CD4-positive, alpha-beta T cell (primary cell): ENCODE measurements at regions of chr17 and their contacts with region 1.

Region 1: GRCh38 chr17:48636177-48637018 is 10.2 kb upstream of the HOXB9 start:
- DNase-seq: peak; percentile 45 to 82 (median 58)
- ATAC-seq: peak; percentile 83
- H3K4me3 ChIP-seq: no peak overlapping the region
- H3K4me3 Mint-ChIP-seq: no peak overlapping the region
- H3K27ac ChIP-seq: no peak overlapping the region
- H3K27ac Mint-ChIP-seq: no peak overlapping the region
- H3K4me1 ChIP-seq: peaks cover 22% of the 10 kb centered on the region
- H3K4me1 Mint-ChIP-seq: peaks cover 13% of the 10 kb centered on the region
- H3K27me3 ChIP-seq: peaks cover 85 to 97% of the 10 kb centered on the region in 2 experiments
- H3K27me3 Mint-ChIP-seq: peaks cover 98% of the 10 kb centered on the region
- CTCF ChIP-seq: peak; percentile 74

Region 2: DNA sequence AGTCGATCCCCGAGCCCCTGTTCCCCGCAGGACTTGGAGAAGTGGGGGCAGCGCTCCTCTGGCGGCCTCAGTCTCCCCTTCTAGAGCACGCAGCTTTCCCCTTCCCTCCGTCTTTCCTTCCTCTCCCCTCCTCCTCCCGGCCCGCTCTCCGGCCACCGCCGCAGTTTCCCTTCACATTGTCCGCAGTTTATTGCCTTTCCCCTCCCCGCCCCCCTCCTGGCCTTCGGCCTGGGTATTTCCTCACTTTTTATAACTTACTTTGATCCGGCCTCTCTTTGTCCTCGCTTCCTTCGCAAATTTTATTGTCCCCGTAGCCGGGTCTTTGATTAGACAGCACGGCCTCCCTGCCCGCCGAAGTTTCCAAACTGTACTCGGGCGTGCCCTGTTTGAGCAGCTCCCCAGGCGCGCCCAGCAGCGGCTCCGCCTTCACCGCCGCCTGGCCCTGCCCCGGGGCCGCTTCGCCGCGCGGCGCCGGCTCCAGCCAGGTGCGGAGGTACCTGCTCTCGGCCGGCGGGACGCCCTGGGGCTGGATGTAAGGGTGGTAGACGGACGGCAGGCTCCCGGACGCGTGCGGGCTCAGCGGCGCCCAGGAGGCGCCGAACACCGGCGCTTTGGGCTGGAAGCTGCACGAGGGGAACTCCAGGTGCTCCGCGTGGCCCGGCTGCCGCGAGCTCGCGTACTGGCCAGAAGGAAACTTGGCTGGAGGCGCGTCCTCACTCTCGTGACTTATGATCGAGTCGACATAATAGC is 10.7 kb before region 1 on chr17:
- CTCF ChIA-PET with region 1: interaction called, 19 read pairs
- POLR2A ChIA-PET with region 1: interaction called, 4 read pairs
- intact Hi-C with region 1: no loop called
- DNase-seq: peak in 5 of 14 experiments; percentile 33 to 76 (median 43)
- ATAC-seq: peak; percentile 63
- H3K4me3 ChIP-seq: peak overlapping the region; percentile 44
- H3K4me3 Mint-ChIP-seq: peak overlapping the region; percentile 52
- H3K27ac ChIP-seq: no peak overlapping the region
- H3K27ac Mint-ChIP-seq: no peak overlapping the region
- H3K4me1 ChIP-seq: peaks cover 31% of the 10 kb centered on the region
- H3K4me1 Mint-ChIP-seq: peaks cover 16% of the 10 kb centered on the region
- H3K27me3 ChIP-seq: peaks cover 88 to 98% of the 10 kb centered on the region in 2 experiments
- H3K27me3 Mint-ChIP-seq: peaks cover 99% of the 10 kb centered on the region
- CTCF ChIP-seq: no peak

Region 3: DNA sequence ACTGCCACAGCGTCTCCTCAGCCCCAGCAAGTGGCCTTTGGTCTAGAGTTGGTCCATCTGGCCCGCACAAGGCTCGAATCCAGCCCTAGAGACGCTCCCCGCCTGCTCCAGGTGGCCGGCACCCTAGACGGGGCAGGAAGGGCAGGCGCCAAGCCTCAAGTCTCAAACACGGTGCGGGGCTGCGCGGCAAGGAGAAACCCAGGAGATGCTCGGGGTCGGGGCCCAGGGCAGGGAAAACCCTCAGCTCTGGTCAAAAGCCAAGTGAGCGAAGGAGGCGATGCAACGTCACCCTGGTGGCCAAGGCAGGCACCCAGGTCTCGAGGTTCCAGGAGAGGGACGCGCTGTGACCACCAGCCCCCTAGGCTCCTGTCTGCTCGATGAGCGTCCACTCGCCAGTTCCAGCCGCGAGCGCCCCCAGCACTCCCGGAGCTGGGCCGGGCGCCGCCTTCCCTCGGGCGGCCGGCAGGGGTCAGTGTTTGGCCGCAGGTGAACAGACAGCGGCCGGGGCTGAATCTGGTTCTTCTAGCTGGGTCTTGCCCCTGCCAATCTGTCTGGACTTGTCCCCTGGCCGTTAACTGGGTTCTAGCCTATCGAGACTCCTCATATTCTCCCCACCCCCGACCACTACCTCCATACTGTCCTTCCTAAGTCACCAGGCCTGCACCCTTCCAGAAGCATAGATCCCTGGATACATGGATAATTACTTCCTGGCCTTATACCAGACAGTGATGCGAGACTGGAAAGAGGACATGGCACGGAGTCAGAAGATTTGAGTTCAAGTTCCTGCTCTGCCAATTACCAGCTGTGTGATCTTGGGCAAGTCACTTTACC is 42.0 kb after region 1 on chr17:
- CTCF ChIA-PET with region 1: interaction called, 10 read pairs
- POLR2A ChIA-PET with region 1: no interaction called
- intact Hi-C with region 1: no loop called
- DNase-seq: peak; percentile 39 to 82 (median 64)
- ATAC-seq: peak; percentile 94
- H3K4me3 ChIP-seq: no peak overlapping the region
- H3K4me3 Mint-ChIP-seq: no peak overlapping the region
- H3K27ac ChIP-seq: no peak overlapping the region
- H3K27ac Mint-ChIP-seq: no peak overlapping the region
- H3K4me1 ChIP-seq: peaks cover 8% of the 10 kb centered on the region
- H3K4me1 Mint-ChIP-seq: no peaks in the 10 kb centered on the region
- H3K27me3 ChIP-seq: peaks cover 12 to 18% of the 10 kb centered on the region in 2 experiments
- H3K27me3 Mint-ChIP-seq: peaks cover 81% of the 10 kb centered on the region
- CTCF ChIP-seq: peak; percentile 98

Region 4: GRCh38 chr17:49016788-49017463 is 380.5 kb after region 1 on chr17:
- CTCF ChIA-PET with region 1: no interaction called
- POLR2A ChIA-PET with region 1: no interaction called
- intact Hi-C with region 1: no loop called
- DNase-seq: no peak
- ATAC-seq: no peak
- H3K4me3 ChIP-seq: no peak overlapping the region
- H3K4me3 Mint-ChIP-seq: no peak overlapping the region
- H3K27ac ChIP-seq: no peak overlapping the region
- H3K27ac Mint-ChIP-seq: no peak overlapping the region
- H3K4me1 ChIP-seq: no peaks in the 10 kb centered on the region
- H3K4me1 Mint-ChIP-seq: no peaks in the 10 kb centered on the region
- H3K27me3 ChIP-seq: peaks cover 33 to 45% of the 10 kb centered on the region in 2 experiments
- H3K27me3 Mint-ChIP-seq: peaks cover 69% of the 10 kb centered on the region
- CTCF ChIP-seq: no peak